ENCODE measurements at regions of chr16 and their contacts with region 1.

Region 1: GRCh38 chr16:84617791-84618580 is at the start of gene COTL1:
- DNase-seq: peak; percentile 96
- ATAC-seq: peak; percentile 88
- H3K4me3 ChIP-seq: peak within 1 kb of the TSS; percentile 73 to 96 (median 85)
- H3K4me3 Mint-ChIP-seq: peak within 1 kb of the TSS; percentile 88
- H3K27ac ChIP-seq: peak within 1 kb of the TSS; percentile 4 to 72
- H3K27ac Mint-ChIP-seq: peak within 1 kb of the TSS; percentile 90
- H3K4me1 ChIP-seq: peaks cover 51 to 67% of the 10 kb centered on the region in 2 donors
- H3K4me1 Mint-ChIP-seq: peaks cover 72% of the 10 kb centered on the region
- H3K27me3 ChIP-seq: no peaks in the 10 kb centered on the region
- H3K27me3 Mint-ChIP-seq: no peaks in the 10 kb centered on the region
- CTCF ChIP-seq: no peak
- total RNA-seq, gene COTL1: 245 and 264 TPM in 2 replicates

Region 2: GRCh38 chr16:84511180-84511824 is 106.7 kb before region 1 on chr16:
- CTCF ChIA-PET with region 1: interaction called, 518 read pairs
- POLR2A ChIA-PET with region 1: interaction called, 5 read pairs
- intact Hi-C with region 1: loop called (anchors 1 kb)
- DNase-seq: peak; percentile 87
- ATAC-seq: peak; percentile 40
- H3K4me3 ChIP-seq: no peak overlapping the region
- H3K4me3 Mint-ChIP-seq: peak overlapping the region; percentile 44
- H3K27ac ChIP-seq: no peak overlapping the region
- H3K27ac Mint-ChIP-seq: peak overlapping the region; percentile 77
- H3K4me1 ChIP-seq: peaks cover 41 to 57% of the 10 kb centered on the region in 2 donors
- H3K4me1 Mint-ChIP-seq: peaks cover 49% of the 10 kb centered on the region
- H3K27me3 ChIP-seq: peaks cover 0 to 3% (median 0%) of the 10 kb centered on the region in 4 experiments
- H3K27me3 Mint-ChIP-seq: no peaks in the 10 kb centered on the region
- CTCF ChIP-seq: peak; percentile 98

Region 3: DNA sequence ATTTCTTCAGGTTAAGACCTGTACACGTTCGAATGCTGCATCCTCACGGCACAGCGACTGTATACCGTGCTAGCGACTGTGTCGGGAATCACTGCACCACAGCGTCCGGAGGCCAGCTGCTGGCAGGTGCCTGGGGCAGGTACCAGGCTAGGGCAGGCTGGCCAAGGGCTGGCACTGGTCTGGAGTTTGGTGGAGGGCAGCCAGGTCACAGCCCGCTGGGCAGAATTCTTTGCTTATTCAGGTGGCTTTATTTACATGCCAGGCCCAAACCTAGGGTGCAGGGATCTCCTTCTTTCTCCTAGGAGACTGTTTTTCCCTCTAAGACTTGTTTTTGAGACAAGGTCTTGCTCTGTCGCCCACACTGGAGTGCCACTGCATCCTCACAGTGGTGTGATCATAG is 38.0 kb before region 1 on chr16:
- CTCF ChIA-PET with region 1: interaction called, 27 read pairs
- POLR2A ChIA-PET with region 1: interaction called, 7 read pairs
- intact Hi-C with region 1: no loop called
- DNase-seq: no peak
- ATAC-seq: no peak
- H3K4me3 ChIP-seq: no peak overlapping the region
- H3K4me3 Mint-ChIP-seq: no peak overlapping the region
- H3K27ac ChIP-seq: peak overlapping the region in 1 of 2 donors; percentile 28
- H3K27ac Mint-ChIP-seq: peak overlapping the region; percentile 78
- H3K4me1 ChIP-seq: peaks cover 22 to 74% of the 10 kb centered on the region in 2 donors
- H3K4me1 Mint-ChIP-seq: peaks cover 73% of the 10 kb centered on the region
- H3K27me3 ChIP-seq: no peaks in the 10 kb centered on the region
- H3K27me3 Mint-ChIP-seq: no peaks in the 10 kb centered on the region
- CTCF ChIP-seq: no peak

Region 4: GRCh38 chr16:84607694-84608093 is 10.3 kb before region 1 on chr16:
- CTCF ChIA-PET with region 1: interaction called, 42 read pairs
- POLR2A ChIA-PET with region 1: interaction called, 4 read pairs
- intact Hi-C with region 1: loop called (anchors 1 kb)
- DNase-seq: peak; percentile 86
- ATAC-seq: peak; percentile 75
- H3K4me3 ChIP-seq: peak overlapping the region in 3 of 5 experiments; percentile 19 to 55 (median 28)
- H3K4me3 Mint-ChIP-seq: peak overlapping the region; percentile 69
- H3K27ac ChIP-seq: peak overlapping the region; percentile 80 to 86
- H3K27ac Mint-ChIP-seq: peak overlapping the region; percentile 91
- H3K4me1 ChIP-seq: peaks cover 89 to 95% of the 10 kb centered on the region in 2 donors
- H3K4me1 Mint-ChIP-seq: peaks cover 93% of the 10 kb centered on the region
- H3K27me3 ChIP-seq: no peaks in the 10 kb centered on the region
- H3K27me3 Mint-ChIP-seq: no peaks in the 10 kb centered on the region
- CTCF ChIP-seq: no peak

Region 5: DNA sequence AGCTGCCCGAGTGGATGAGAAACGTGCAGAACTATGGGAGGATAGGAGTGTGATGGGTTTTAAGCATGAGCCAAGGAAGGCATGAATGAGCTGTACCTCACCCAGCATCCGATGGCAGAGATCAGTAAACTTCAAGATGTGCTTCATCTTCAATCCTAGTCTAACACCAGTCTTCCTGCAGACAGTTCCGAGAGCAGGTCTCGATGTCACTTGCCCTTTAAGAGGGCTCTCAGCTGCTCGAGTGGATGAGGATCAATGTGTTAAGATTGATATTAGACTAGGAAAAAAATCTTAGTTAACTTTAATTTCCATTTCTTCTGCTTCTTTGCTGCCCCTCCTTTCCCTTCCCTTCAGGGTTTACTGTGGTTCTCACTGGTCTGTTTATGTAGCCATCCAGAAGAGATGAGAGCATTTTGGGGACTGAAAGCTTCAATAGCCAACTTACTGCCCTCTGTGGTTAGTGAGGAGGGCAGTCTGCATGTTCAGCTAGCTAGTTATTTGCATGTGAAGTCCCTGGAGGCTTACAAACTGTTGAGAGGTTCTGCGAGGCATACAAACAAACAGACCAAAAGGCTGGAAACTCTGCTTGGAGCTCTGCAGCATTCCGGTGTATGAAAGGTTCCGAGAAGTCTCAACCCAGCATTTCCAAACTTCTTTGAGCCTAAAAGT is 45.6 kb after region 1 on chr16:
- CTCF ChIA-PET with region 1: interaction called, 49 read pairs
- POLR2A ChIA-PET with region 1: interaction called, 3 read pairs
- intact Hi-C with region 1: no loop called
- DNase-seq: peak; percentile 61
- ATAC-seq: peak; percentile 93
- H3K4me3 ChIP-seq: peak overlapping the region in 1 of 5 experiments; percentile 20
- H3K4me3 Mint-ChIP-seq: peak overlapping the region; percentile 78
- H3K27ac ChIP-seq: peak overlapping the region in 1 of 2 donors; percentile 16
- H3K27ac Mint-ChIP-seq: peak overlapping the region; percentile 69
- H3K4me1 ChIP-seq: peaks cover 23 to 24% of the 10 kb centered on the region in 2 donors
- H3K4me1 Mint-ChIP-seq: peaks cover 29% of the 10 kb centered on the region
- H3K27me3 ChIP-seq: no peaks in the 10 kb centered on the region
- H3K27me3 Mint-ChIP-seq: no peaks in the 10 kb centered on the region
- CTCF ChIP-seq: no peak

Region 6: DNA sequence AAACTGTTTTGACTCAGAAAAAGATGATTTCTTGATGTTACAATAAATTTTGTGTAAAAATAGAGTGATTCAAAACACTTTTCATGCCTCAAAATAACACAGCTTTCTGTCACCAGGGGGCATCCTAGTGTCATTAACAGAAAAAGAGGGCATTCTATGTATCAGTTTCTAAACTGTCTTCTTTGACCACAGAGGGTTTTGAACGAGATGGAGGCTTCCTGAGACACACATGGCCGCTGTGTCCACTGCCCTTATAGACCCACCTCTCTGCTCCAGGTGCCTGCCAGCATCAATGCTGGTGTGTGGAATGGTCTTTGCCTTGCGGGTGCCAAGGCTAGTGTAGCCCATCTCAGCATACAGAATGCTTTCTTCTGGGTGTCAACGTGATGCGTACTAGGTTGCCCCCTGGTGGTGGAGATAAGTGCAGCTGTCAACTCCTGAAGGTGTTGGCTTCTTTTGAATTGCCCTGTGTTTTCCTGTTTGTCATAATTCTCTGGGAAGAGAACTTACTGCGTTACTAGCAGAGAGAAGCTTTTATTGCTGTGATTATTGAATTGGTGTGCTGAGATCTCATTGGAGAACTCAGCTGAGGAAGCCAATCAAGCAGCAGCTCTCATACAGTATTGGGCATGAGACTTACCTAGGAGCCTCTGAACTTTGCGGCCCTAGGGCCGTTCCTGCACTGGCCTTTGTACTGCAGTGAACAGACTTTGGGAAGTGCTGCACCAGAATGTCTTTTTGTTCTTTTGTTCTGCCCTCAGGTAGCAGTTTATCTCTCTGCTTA is 120.5 kb after region 1 on chr16:
- CTCF ChIA-PET with region 1: interaction called, 536 read pairs
- POLR2A ChIA-PET with region 1: interaction called, 3 read pairs
- intact Hi-C with region 1: loop called (anchors 1 kb)
- DNase-seq: peak; percentile 89
- ATAC-seq: peak; percentile 89
- H3K4me3 ChIP-seq: no peak overlapping the region
- H3K4me3 Mint-ChIP-seq: peak overlapping the region; percentile 46
- H3K27ac ChIP-seq: no peak overlapping the region
- H3K27ac Mint-ChIP-seq: peak overlapping the region; percentile 27
- H3K4me1 ChIP-seq: peaks cover 6 to 12% of the 10 kb centered on the region in 2 donors
- H3K4me1 Mint-ChIP-seq: peaks cover 30% of the 10 kb centered on the region
- H3K27me3 ChIP-seq: no peaks in the 10 kb centered on the region
- H3K27me3 Mint-ChIP-seq: no peaks in the 10 kb centered on the region
- CTCF ChIP-seq: peak; percentile 96